Calu3 (cell line): ENCODE measurements at regions of chr1 and their contacts with region 1.

Region 1: DNA sequence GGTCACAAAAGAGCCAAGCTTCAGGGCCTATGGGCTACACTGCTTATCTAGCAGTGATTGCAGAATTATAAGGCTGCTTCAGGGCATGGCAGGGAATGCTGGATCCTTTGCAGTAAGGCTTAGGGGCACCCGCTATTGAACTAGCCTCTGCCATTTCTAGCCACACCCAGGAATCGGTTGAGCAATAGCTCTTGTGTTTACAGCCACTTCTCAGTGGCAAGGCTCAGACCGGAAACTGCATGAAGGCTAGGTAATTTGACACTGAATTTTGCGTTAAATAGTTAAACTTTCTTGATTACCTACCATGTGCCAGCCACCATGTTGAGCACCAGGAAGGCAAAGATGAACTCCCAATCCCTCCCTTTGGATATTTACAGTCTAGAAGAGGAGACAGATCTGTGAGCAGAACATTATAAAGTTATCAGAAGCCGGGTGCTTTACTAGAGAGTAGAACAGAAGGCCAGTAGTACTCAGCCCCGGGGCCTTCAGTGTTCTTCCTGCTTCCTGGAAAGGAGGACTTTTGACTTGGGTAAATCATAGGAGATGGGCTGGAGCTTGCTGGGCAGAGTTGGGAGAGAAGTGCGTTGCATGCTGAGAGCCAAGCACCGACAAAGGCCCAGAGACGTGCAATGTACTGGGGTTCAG is 98.6 kb upstream of the LPGAT1 start:
- DNase-seq: peak; percentile 75
- H3K4me3 Mint-ChIP-seq: peak overlapping the region; percentile 47
- H3K27ac Mint-ChIP-seq: peak overlapping the region; percentile 83
- H3K4me1 Mint-ChIP-seq: peaks cover 21% of the 10 kb centered on the region
- H3K27me3 Mint-ChIP-seq: no peaks in the 10 kb centered on the region
- CTCF ChIP-seq: no peak

Region 2: DNA sequence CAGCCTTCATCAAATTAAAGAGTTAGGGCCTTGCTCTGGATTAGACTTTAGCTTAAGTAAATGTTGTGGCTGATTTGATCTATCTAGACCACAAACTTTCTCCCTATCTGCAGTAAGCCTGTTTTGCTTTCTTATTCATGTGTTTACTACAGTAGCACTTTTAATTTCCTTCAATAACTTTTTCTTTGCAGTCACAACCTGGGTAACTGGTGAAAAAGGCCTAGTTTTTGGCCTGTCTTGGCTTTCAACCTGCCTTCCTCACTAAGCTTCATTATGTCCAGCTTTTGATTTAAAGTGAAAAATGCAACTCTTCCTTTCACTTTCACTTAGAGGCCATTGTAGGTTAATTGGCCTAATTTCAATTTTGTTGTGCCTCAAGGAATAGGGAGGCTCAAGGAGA is 86.1 kb before region 1 on chr1:
- CTCF ChIA-PET with region 1: no interaction called
- intact Hi-C with region 1: loop called (anchors 5 kb)
- DNase-seq: no peak
- H3K4me3 Mint-ChIP-seq: peak overlapping the region; percentile 31
- H3K27ac Mint-ChIP-seq: peak overlapping the region; percentile 13
- H3K4me1 Mint-ChIP-seq: peaks cover 15% of the 10 kb centered on the region
- H3K27me3 Mint-ChIP-seq: no peaks in the 10 kb centered on the region
- CTCF ChIP-seq: no peak

Region 3: GRCh38 chr1:211885747-211886522 is 43.2 kb before region 1 on chr1:
- CTCF ChIA-PET with region 1: no interaction called
- intact Hi-C with region 1: loop called (anchors 5 kb)
- DNase-seq: no peak
- H3K4me3 Mint-ChIP-seq: no peak overlapping the region
- H3K27ac Mint-ChIP-seq: no peak overlapping the region
- H3K4me1 Mint-ChIP-seq: peaks cover 25% of the 10 kb centered on the region
- H3K27me3 Mint-ChIP-seq: no peaks in the 10 kb centered on the region
- CTCF ChIP-seq: no peak

Region 4: DNA sequence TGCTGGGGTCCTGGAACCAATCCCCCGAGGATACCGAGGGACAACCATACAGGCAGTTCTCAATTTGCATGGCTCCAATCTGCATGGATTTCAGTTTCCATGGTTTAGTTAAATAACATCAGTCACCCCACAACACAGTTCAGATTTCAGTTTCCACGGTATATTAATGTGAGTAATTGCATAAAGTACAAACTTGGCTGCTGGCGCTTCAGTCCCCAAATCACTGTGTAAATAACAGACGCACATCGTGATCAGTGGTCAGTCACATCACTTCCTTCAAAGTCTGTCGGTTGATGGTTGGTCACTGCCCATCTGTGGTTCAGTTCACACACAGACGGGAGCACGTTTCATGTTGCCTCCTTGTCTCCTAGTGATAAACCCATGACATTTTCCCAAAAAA is 32.2 kb before region 1 on chr1:
- CTCF ChIA-PET with region 1: no interaction called
- intact Hi-C with region 1: no loop called
- DNase-seq: no peak
- H3K4me3 Mint-ChIP-seq: no peak overlapping the region
- H3K27ac Mint-ChIP-seq: no peak overlapping the region
- H3K4me1 Mint-ChIP-seq: peaks cover 14% of the 10 kb centered on the region
- H3K27me3 Mint-ChIP-seq: no peaks in the 10 kb centered on the region
- CTCF ChIP-seq: no peak

Region 5: GRCh38 chr1:211944733-211945500 is 15.8 kb after region 1 on chr1:
- CTCF ChIA-PET with region 1: interaction called, 11 read pairs
- intact Hi-C with region 1: no loop called
- DNase-seq: peak; percentile 85
- H3K4me3 Mint-ChIP-seq: no peak overlapping the region
- H3K27ac Mint-ChIP-seq: peak overlapping the region; percentile 43
- H3K4me1 Mint-ChIP-seq: peaks cover 14% of the 10 kb centered on the region
- H3K27me3 Mint-ChIP-seq: no peaks in the 10 kb centered on the region
- CTCF ChIP-seq: peak; percentile 43

Region 6: GRCh38 chr1:212353181-212353580 is 424.1 kb after region 1 on chr1:
- CTCF ChIA-PET with region 1: no interaction called
- intact Hi-C with region 1: no loop called
- DNase-seq: no peak
- H3K4me3 Mint-ChIP-seq: no peak overlapping the region
- H3K27ac Mint-ChIP-seq: no peak overlapping the region
- H3K4me1 Mint-ChIP-seq: no peaks in the 10 kb centered on the region
- H3K27me3 Mint-ChIP-seq: no peaks in the 10 kb centered on the region
- CTCF ChIP-seq: no peak